ENCODE measurements at regions of chrX and their contacts with region 1.

Region 1: DNA sequence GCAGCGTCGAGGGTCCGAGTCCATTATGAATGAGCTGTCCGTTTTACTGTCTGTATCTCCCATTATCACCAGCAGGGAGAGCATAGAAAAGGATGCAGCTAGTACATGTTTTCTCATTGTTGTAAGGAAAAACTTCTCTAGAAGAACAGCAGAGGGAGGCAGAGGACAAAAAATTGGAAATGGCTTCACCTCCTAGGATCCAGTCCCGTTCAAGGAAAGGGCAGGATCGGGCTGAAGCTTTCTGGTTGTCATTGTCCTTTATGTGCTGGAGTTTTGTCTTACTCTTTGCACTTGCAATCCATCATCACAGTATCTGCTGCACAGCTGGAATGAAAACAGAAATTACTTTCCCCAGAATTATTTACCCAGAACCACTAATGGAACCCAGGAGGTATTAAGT is 14.7 kb downstream of the NDP start:
- DNase-seq: peak; percentile 90
- H3K4me3 Mint-ChIP-seq: no peak overlapping the region
- H3K27ac Mint-ChIP-seq: no peak overlapping the region
- H3K4me1 Mint-ChIP-seq: no peaks in the 10 kb centered on the region
- H3K27me3 Mint-ChIP-seq: peaks cover 51% of the 10 kb centered on the region
- CTCF ChIP-seq: peak; percentile 87

Region 2: DNA sequence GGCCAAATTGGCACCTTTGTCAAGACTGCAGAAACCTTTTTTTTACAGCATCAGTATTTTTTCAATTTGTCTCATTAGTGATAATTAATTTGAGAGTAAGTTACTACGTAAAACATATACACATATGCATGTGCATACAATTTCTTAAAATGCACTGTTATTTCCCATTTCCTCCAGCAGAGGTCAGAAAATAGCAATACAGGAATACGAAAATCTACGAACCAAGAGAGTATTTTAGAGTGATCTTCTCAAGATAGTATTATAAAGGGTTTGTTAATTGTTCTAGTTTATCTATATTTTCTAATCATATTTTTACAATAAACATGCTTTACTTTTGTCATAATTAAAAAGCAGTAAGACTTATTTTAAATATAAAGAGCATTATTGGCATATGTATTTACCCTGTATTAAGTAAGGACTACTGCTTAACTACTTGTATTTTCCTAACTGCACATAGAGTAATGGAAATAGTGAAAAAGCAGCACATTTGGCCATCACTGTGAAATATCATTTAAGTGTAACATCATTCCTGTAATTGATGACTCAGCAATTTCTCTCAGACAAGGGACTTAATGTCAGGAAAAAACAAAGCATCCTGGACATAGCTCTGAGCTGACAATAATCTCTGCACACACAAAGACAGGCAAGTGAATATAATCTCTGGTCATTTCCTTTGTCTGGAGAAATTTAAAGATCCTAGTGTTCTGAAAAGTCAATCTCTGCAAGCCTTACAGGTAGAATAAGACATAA is 121.9 kb before region 1 on chrX:
- CTCF ChIA-PET with region 1: interaction called, 8 read pairs
- POLR2A ChIA-PET with region 1: no interaction called
- intact Hi-C with region 1: loop called (anchors 1 kb)
- DNase-seq: peak; percentile 50
- H3K4me3 Mint-ChIP-seq: no peak overlapping the region
- H3K27ac Mint-ChIP-seq: no peak overlapping the region
- H3K4me1 Mint-ChIP-seq: no peaks in the 10 kb centered on the region
- H3K27me3 Mint-ChIP-seq: peaks cover 62% of the 10 kb centered on the region
- CTCF ChIP-seq: peak; percentile 55

Region 3: DNA sequence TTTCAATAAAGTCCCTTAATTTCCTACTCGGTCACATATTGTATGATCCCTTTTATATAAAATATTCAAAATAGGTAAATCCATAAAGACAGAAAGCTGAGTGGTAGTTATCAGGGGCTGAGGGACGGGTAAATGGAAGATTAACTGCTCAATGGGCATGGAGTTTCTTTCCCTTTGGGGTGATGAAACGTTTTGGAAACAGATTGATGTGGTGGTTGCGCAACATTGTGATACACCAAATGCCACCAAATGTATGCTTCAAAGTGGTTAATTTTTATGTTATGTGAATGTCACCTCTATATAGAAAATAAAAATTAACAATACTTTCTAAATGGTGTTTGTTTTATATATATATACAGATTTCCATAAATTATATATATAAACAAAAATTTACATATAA is 61.2 kb before region 1 on chrX:
- CTCF ChIA-PET with region 1: no interaction called
- POLR2A ChIA-PET with region 1: no interaction called
- intact Hi-C with region 1: no loop called
- DNase-seq: no peak
- H3K4me3 Mint-ChIP-seq: no peak overlapping the region
- H3K27ac Mint-ChIP-seq: no peak overlapping the region
- H3K4me1 Mint-ChIP-seq: no peaks in the 10 kb centered on the region
- H3K27me3 Mint-ChIP-seq: peaks cover 45% of the 10 kb centered on the region
- CTCF ChIP-seq: no peak

Region 4: GRCh38 chrX:44025555-44025954 is 67.0 kb after region 1 on chrX:
- CTCF ChIA-PET with region 1: interaction called, 18 read pairs
- POLR2A ChIA-PET with region 1: no interaction called
- intact Hi-C with region 1: loop called (anchors 1 kb)
- DNase-seq: no peak
- H3K4me3 Mint-ChIP-seq: no peak overlapping the region
- H3K27ac Mint-ChIP-seq: no peak overlapping the region
- H3K4me1 Mint-ChIP-seq: peaks cover 5% of the 10 kb centered on the region
- H3K27me3 Mint-ChIP-seq: peaks cover 37% of the 10 kb centered on the region
- CTCF ChIP-seq: no peak

Region 5: GRCh38 chrX:44542567-44543325 is 584.2 kb after region 1 on chrX and contains the start of gene FUNDC1:
- CTCF ChIA-PET with region 1: no interaction called
- POLR2A ChIA-PET with region 1: no interaction called
- intact Hi-C with region 1: loop called (anchors 10 kb)
- DNase-seq: peak; percentile 93
- H3K4me3 Mint-ChIP-seq: peak within 1 kb of the TSS; percentile 92
- H3K27ac Mint-ChIP-seq: peak within 1 kb of the TSS; percentile 98
- H3K4me1 Mint-ChIP-seq: peaks cover 8% of the 10 kb centered on the region
- H3K27me3 Mint-ChIP-seq: peaks cover 68% of the 10 kb centered on the region
- CTCF ChIP-seq: no peak
- total RNA-seq, gene FUNDC1: 14.7 and 20.2 TPM in 2 replicates

Region 6: GRCh38 chrX:45070116-45071007 is 1111.8 kb after region 1 on chrX:
- CTCF ChIA-PET with region 1: interaction called, 3 read pairs
- POLR2A ChIA-PET with region 1: no interaction called
- intact Hi-C with region 1: loop called (anchors 1 kb)
- DNase-seq: peak; percentile 68
- H3K4me3 Mint-ChIP-seq: no peak overlapping the region
- H3K27ac Mint-ChIP-seq: no peak overlapping the region
- H3K4me1 Mint-ChIP-seq: peaks cover 14% of the 10 kb centered on the region
- H3K27me3 Mint-ChIP-seq: no peaks in the 10 kb centered on the region
- CTCF ChIP-seq: peak; percentile 64